Right ventricle myocardium inferior (tissue), 1 donor: ENCODE measurements at regions of chr5 and their contacts with region 1.

Region 1: DNA sequence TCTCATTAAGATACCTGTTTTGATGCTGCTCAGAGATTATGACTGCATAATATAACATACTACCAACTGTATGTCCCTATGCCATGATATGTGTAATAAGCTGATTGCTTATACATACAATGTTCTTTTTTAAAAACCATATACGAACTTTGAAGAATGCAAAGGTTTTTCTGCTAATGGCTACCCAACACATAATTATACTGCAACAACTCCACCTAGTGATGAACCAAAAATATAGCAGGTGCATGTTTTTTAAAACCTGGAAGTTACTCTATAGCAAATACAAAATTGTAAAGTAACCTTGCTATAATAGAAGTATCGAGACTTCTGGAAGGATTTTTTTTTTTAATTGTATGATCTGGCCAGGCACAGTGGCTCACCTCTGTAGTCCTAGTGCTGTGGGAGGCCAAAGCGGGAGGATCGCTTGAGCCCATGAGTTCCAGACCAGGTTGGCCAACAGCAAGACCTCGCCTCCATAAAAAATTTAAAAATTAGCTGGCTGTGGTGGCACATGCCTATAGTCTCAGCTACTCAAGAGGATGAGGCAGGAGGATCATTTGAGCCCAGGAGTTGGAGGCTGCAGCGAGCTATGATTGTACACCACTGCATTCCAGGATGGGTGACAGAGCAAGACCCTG is 49.1 kb downstream of the HOMER1 start:
- DNase-seq: no peak
- ATAC-seq: peak; percentile 20

Region 2: DNA sequence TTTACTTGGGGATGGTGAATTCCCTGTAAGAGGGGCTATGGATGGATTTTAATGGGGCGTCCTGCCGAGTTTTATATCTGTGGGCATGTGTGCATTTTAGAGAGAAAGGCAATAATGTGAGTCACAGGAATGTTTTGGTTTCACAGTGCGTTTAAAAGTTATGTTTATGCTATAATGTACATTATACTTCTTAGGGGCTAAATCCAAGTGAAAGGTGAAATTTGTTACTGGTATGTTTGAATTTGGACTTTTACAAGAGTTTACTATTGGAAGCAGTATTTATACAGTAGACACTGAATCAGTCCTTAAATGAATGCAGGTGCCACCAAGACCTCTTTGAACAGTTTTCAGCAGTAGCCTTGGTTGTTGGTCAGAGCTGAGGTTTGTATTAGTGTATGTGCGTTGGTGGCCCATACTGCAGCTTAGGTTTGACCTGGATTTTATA is 223.3 kb before region 1 on chr5:
- intact Hi-C with region 1: no loop called
- DNase-seq: no peak
- ATAC-seq: no peak

Region 3: GRCh38 chr5:79255786-79256557 is 208.8 kb before region 1 on chr5:
- intact Hi-C with region 1: loop called (anchors 10 kb)
- DNase-seq: no peak
- ATAC-seq: peak; percentile 57

Region 4: DNA sequence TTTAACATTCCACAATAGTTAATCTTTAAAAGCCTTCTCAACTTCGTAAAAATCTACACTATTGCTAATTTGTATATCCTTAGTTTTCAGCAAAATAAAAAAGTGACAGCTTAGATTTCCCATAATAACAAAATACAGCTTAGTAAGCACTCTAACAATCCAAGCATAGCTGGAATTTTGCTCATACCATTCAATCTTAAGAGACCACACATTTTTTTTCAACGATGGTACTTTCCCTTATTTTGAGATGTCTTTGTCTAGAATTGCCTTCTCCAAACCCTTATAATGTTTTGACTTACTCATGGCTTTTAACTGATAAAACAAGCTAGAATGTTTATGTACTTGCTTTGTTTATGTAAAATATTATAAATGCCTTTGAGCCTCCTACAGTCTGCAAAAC is 16.5 kb before region 1 on chr5:
- intact Hi-C with region 1: no loop called
- DNase-seq: no peak
- ATAC-seq: no peak

Region 5: GRCh38 chr5:79503794-79504495 is 39.1 kb after region 1 on chr5:
- intact Hi-C with region 1: no loop called
- DNase-seq: no peak
- ATAC-seq: no peak

Region 6: DNA sequence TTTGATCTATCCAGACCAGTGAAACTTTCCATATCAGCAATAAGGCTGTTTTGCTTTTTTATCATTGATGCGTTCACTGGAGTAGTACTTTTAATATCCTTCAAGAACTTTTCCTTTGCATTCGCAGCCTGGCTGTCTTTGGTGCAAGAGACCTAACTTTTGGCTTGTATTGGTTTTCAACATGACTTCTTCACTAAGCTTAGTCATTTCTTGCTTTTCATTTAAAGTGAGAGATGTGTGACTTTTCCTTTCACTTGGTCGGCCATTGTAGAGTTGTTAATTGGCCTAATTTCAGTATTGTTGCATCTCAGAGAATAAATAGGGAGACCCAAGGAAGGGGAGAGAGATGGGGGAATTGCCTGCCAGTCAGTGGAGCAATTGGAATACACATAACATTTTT is 198.4 kb after region 1 on chr5:
- intact Hi-C with region 1: no loop called
- DNase-seq: no peak
- ATAC-seq: no peak